ENCODE measurements at regions of chr1 and their contacts with region 1.

Region 1: GRCh38 chr1:169106095-169106920 is at the start of gene ATP1B1:
- DNase-seq: peak; percentile 79
- ATAC-seq: peak; percentile 79
- H3K4me3 ChIP-seq: peak within 1 kb of the TSS; percentile 95 to 99 (median 96)
- H3K27ac ChIP-seq: peak within 1 kb of the TSS; percentile 95
- H3K4me1 ChIP-seq: peaks cover 65% of the 10 kb centered on the region
- H3K27me3 ChIP-seq: no peaks in the 10 kb centered on the region; a peak in 1 of 5 replicates
- CTCF ChIP-seq: no peak; the same call in 1 of the 2 replicates
- EP300 ChIP-seq: peak in 1 of 2 experiments; percentile 54; a peak in 2 of 4 replicates
- POLR2A ChIP-seq: peak; percentile 98 to 99
- RAD21 ChIP-seq: peak; percentile 37; the same call in 1 of the 2 replicates
- total RNA-seq, gene ATP1B1: 89.8 and 135 TPM in 2 replicates

Region 2: DNA sequence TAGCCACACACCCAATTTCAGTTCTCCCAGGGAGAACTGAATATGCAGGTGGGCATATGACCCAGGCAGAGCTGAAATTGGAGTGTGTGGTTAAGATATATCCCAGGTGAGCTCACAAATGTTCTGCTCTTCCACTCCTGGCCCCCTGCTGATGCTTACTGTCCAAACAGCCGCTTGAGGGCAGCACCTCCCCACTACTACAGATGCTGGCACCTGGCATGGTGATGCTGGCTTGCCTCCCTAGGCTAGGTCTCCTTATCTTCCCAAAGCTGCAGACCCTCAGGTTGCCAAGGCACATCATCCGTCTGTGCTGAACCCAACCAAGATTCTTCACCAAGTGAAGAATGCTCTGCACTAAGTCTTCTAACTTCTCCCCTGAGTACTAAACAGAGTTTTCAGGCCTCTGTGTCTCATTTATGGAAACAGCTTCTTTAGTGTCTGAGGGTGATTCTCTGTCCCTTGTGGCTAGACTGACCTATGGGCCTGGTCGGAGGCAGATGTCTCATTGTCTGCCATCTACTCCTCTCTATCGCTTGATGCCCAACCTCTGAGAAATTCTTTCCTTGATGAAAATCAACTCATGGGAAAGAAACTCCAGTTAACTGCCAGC is 502.7 kb before region 1 on chr1:
- CTCF ChIA-PET with region 1: no interaction called
- POLR2A ChIA-PET with region 1: no interaction called
- in situ Hi-C with region 1: no loop called
- intact Hi-C with region 1: loop called (anchors 1 kb)
- DNase-seq: peak; percentile 60
- ATAC-seq: peak; percentile 99
- H3K4me3 ChIP-seq: no peak overlapping the region
- H3K27ac ChIP-seq: no peak overlapping the region
- H3K4me1 ChIP-seq: no peaks in the 10 kb centered on the region
- H3K27me3 ChIP-seq: no peaks in the 10 kb centered on the region; a peak in 1 of 5 replicates
- CTCF ChIP-seq: peak; percentile 96
- EP300 ChIP-seq: no peak
- POLR2A ChIP-seq: no peak
- RAD21 ChIP-seq: peak; percentile 96

Region 3: GRCh38 chr1:168834225-168834872 is 272.0 kb before region 1 on chr1:
- CTCF ChIA-PET with region 1: no interaction called
- POLR2A ChIA-PET with region 1: interaction called, 4 read pairs
- in situ Hi-C with region 1: no loop called
- intact Hi-C with region 1: loop called (anchors 1 kb)
- DNase-seq: peak; percentile 96
- ATAC-seq: peak; percentile 91
- H3K4me3 ChIP-seq: peak overlapping the region; percentile 22 to 37 (median 29); a peak in 3 of 6 replicates
- H3K27ac ChIP-seq: peak overlapping the region; percentile 97
- H3K4me1 ChIP-seq: peaks cover 70% of the 10 kb centered on the region
- H3K27me3 ChIP-seq: no peaks in the 10 kb centered on the region
- CTCF ChIP-seq: no peak
- EP300 ChIP-seq: peak in 1 of 2 experiments; percentile 95; a peak in 2 of 4 replicates
- POLR2A ChIP-seq: peak; percentile 52 to 57; a peak in 2 of 4 replicates
- RAD21 ChIP-seq: 0 out of 2 replicates have a peak, but pooled peaks have one; percentile 3

Region 4: GRCh38 chr1:169003864-169004516 is 102.3 kb before region 1 on chr1:
- CTCF ChIA-PET with region 1: no interaction called
- POLR2A ChIA-PET with region 1: no interaction called
- in situ Hi-C with region 1: no loop called
- intact Hi-C with region 1: loop called (anchors 10 kb)
- DNase-seq: no peak
- ATAC-seq: no peak
- H3K4me3 ChIP-seq: no peak overlapping the region
- H3K27ac ChIP-seq: no peak overlapping the region
- H3K4me1 ChIP-seq: no peaks in the 10 kb centered on the region
- H3K27me3 ChIP-seq: 0 out of 5 replicates have a peak, but pooled peaks cover 0 to 4% of the 10 kb centered on the region in 2 experiments
- CTCF ChIP-seq: no peak
- EP300 ChIP-seq: peak in 1 of 2 experiments; percentile 16; a peak in 1 of 4 replicates
- POLR2A ChIP-seq: no peak
- RAD21 ChIP-seq: no peak

Region 5: GRCh38 chr1:169348383-169349036 is 242.2 kb after region 1 on chr1:
- CTCF ChIA-PET with region 1: no interaction called
- POLR2A ChIA-PET with region 1: interaction called, 4 read pairs
- in situ Hi-C with region 1: no loop called
- intact Hi-C with region 1: loop called (anchors 5 kb)
- DNase-seq: peak; percentile 43
- ATAC-seq: no peak
- H3K4me3 ChIP-seq: no peak overlapping the region
- H3K27ac ChIP-seq: no peak overlapping the region
- H3K4me1 ChIP-seq: peaks cover 14% of the 10 kb centered on the region
- H3K27me3 ChIP-seq: no peaks in the 10 kb centered on the region
- CTCF ChIP-seq: peak; percentile 79
- EP300 ChIP-seq: no peak
- POLR2A ChIP-seq: no peak
- RAD21 ChIP-seq: peak; percentile 71

Measured in HepG2 (cell line).